ENCODE measurements at regions of chr1 and their contacts with region 1.

Region 1: GRCh38 chr1:40838045-40838979 is 23.9 kb downstream of the CITED4 start:
- DNase-seq: no peak

Region 2: DNA sequence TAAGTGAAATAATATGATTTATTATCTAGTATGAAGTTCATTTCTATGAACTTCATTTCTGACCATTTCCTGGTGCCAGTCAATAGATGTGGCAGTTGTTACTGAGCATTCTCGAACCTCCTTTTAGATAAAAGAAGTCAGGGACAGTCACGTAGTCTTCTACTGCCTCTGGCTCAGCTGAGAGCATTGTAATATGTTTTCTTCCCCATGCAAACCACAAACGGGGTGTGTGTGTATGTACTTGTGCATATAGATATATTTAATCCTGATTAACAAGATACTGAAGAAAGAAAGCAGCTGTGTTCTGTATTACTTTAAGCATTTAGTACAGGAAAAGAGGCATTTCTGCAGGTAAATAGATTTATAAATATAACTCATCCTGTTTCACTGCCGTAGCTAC is 285.3 kb before region 1 on chr1:
- intact Hi-C with region 1: no loop called
- DNase-seq: no peak

Region 3: GRCh38 chr1:40612345-40612831 is 225.9 kb before region 1 on chr1:
- intact Hi-C with region 1: loop called (anchors 2 kb)
- DNase-seq: no peak

Region 4: GRCh38 chr1:40684669-40685068 is 153.6 kb before region 1 on chr1:
- intact Hi-C with region 1: loop called (anchors 5 kb)
- DNase-seq: no peak

Measured in cardiac septum (tissue), 1 donor.